Mammary epithelial cell (primary cell): ENCODE measurements at regions of chr7 and their contacts with region 1.

Region 1: GRCh38 chr7:74656837-74657691 is 454 bp upstream of the GTF2I start:
- DNase-seq: peak; percentile 93
- H3K4me3 ChIP-seq: peak overlapping the region; percentile 82 to 90 (median 85)
- H3K27ac ChIP-seq: peak overlapping the region; percentile 87
- H3K4me1 ChIP-seq: peaks cover 39% of the 10 kb centered on the region
- H3K27me3 ChIP-seq: no peaks in the 10 kb centered on the region
- CTCF ChIP-seq: peak in 1 of 2 donors; percentile 22

Region 2: GRCh38 chr7:74417419-74417971 is 239.6 kb before region 1 on chr7:
- CTCF ChIA-PET with region 1: no interaction called
- dilution Hi-C with region 1: no loop called
- in situ Hi-C with region 1: no loop called
- intact Hi-C with region 1: loop called (anchors 5 kb)
- DNase-seq: peak; percentile 33
- H3K4me3 ChIP-seq: no peak overlapping the region
- H3K27ac ChIP-seq: no peak overlapping the region
- H3K4me1 ChIP-seq: no peaks in the 10 kb centered on the region
- H3K27me3 ChIP-seq: no peaks in the 10 kb centered on the region
- CTCF ChIP-seq: peak; percentile 92 to 99

Region 3: DNA sequence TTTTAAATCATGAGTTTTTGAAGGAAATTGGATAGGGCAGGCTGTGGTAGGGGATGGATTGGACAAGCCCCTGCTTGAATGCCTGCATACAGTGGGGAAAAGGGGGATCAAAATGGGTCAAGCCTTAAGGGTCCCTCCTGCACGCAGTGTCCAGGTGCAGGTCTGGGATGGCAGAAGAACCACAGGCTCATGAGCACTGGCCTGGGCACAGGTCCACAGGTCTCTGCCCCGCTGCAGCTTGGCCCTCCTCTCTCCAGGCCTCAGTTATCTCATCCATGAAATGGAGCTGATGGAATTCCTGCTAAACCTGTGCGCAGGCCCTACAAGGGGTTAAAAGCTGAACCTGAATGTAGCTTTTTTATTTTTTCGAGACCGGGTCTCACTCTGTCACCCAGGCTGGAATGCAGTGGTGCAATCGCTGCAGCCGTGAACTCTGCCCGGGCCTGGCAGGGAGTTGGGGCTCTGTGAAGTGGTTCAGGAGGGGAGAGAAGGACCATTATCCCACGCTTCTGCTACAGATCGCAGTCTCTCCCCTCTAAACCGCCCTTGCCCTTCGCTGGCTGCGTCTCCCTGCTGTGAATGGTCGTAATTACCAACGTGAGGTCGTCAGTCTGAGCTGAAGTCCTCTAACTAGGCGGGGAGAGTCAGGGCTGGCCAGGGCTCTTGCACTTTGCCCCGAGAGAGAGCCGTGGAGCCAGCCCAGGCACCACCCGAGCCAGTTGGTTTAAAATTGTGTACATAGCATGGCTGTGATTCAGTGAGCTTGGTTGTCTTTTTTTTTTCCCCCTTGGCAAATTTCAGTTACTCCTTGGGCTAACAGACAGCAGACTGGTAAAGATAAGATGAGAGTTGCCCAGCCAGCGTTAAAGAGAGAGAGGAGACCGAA is 77.0 kb before region 1 on chr7:
- CTCF ChIA-PET with region 1: no interaction called
- dilution Hi-C with region 1: no loop called
- in situ Hi-C with region 1: no loop called
- intact Hi-C with region 1: loop called (anchors 5 kb)
- DNase-seq: peak; percentile 45
- H3K4me3 ChIP-seq: no peak overlapping the region
- H3K27ac ChIP-seq: no peak overlapping the region
- H3K4me1 ChIP-seq: peaks cover 49% of the 10 kb centered on the region
- H3K27me3 ChIP-seq: no peaks in the 10 kb centered on the region
- CTCF ChIP-seq: no peak

Region 4: DNA sequence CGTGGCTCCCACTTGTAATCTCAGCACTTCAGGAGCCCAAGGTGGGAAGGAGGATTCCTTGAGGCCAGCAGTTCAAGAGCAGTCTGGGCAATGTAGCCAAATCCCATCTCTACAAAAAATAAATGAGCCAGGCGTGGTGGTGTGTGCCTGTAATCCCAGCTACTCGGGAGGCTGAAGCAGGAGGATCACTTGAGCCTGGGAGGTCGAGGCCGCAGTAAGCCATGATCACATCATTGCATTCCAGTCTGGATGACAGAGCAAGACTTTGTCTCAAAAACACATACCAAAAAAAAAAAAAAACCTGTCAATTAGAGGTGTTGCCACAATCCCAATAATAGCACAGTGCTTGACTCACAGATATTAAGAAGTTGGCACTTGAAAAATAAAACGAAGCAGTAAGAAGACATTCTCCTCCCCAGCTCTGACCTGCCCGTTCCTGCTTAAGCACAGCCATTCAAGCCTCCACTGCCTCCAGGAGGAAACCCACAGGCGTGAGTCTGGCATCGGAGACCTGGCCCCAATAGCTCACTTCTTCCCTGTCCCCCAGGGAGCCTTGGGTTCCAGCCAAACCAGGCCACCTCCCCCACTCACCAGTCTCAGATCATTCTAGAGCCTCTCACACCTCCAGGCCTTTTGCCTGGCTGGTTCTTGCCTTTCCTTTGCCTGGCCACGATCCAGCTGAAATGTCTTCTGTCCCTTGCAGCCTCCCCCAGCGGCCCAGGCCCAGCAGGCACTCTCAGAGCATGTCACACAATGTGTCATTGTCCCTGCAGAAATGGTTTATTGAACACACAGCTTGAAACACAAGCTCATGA is 44.8 kb before region 1 on chr7:
- CTCF ChIA-PET with region 1: interaction called, 3 read pairs
- dilution Hi-C with region 1: no loop called
- in situ Hi-C with region 1: no loop called
- intact Hi-C with region 1: loop called (anchors 2 kb)
- DNase-seq: peak; percentile 86
- H3K4me3 ChIP-seq: no peak overlapping the region
- H3K27ac ChIP-seq: peak overlapping the region; percentile 1
- H3K4me1 ChIP-seq: peaks cover 9% of the 10 kb centered on the region
- H3K27me3 ChIP-seq: no peaks in the 10 kb centered on the region
- CTCF ChIP-seq: peak in 1 of 2 donors; percentile 20

Region 5: GRCh38 chr7:74672343-74672915 is 15.4 kb after region 1 on chr7:
- CTCF ChIA-PET with region 1: no interaction called
- dilution Hi-C with region 1: no loop called
- in situ Hi-C with region 1: no loop called
- intact Hi-C with region 1: loop called (anchors 1 kb)
- DNase-seq: no peak
- H3K4me3 ChIP-seq: no peak overlapping the region
- H3K27ac ChIP-seq: no peak overlapping the region
- H3K4me1 ChIP-seq: peaks cover 5% of the 10 kb centered on the region
- H3K27me3 ChIP-seq: no peaks in the 10 kb centered on the region
- CTCF ChIP-seq: no peak

Region 6: GRCh38 chr7:75038553-75038952 is 381.5 kb after region 1 on chr7:
- CTCF ChIA-PET with region 1: interaction called, 25 read pairs
- dilution Hi-C with region 1: no loop called
- in situ Hi-C with region 1: no loop called
- intact Hi-C with region 1: no loop called
- DNase-seq: no peak
- H3K4me3 ChIP-seq: no peak overlapping the region
- H3K27ac ChIP-seq: peak overlapping the region; percentile 33
- H3K4me1 ChIP-seq: peaks cover 21% of the 10 kb centered on the region
- H3K27me3 ChIP-seq: no peaks in the 10 kb centered on the region
- CTCF ChIP-seq: peak in 1 of 2 donors; percentile 12